ENCODE measurements at regions of chr4 and their contacts with region 1.

Region 1: GRCh38 chr4:176034499-176034898 is 31.1 kb upstream of the WDR17 start:
- DNase-seq: no peak
- H3K4me3 ChIP-seq: no peak overlapping the region
- H3K27ac ChIP-seq: no peak overlapping the region
- H3K4me1 ChIP-seq: no peaks in the 10 kb centered on the region
- H3K27me3 ChIP-seq: no peaks in the 10 kb centered on the region
- CTCF ChIP-seq: peak; percentile 41 to 49

Region 2: DNA sequence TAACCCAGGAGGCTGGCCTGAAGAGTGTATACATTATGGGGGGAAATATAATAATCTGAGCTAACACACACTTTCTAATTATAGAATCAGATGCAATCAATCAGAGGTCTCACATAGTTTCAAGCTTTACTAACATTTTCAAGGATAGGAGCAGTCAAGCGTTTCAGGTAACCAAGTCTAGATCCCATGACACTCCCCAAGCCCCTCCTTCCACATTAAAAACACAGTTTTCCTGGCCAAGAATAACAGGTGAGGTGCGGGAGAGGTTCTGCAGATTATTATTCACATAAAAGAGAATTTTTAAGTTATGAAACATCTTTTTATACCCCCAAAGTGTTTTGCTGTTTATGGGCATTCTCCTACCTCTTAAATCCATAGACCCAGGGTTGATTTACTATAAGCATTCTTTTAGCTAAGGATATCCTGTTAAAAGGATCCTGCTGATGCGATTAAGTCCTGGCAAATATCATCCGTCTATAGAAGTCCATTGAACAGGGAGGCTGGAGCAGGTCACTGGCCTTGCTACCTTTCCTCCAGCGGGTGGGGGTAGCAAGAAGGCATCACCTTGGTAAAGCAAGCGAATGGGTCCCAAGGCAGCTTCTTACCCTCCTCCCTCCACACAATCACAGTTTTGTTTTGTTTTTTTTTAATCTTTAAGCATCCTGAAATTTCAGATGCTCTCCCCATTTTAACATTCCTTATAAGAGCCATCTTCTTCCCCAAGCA is 117.7 kb before region 1 on chr4:
- intact Hi-C with region 1: no loop called
- DNase-seq: no peak
- H3K4me3 ChIP-seq: no peak overlapping the region
- H3K27ac ChIP-seq: no peak overlapping the region
- H3K4me1 ChIP-seq: no peaks in the 10 kb centered on the region
- H3K27me3 ChIP-seq: no peaks in the 10 kb centered on the region
- CTCF ChIP-seq: no peak

Region 3: GRCh38 chr4:175953960-175954521 is 80.5 kb before region 1 on chr4:
- intact Hi-C with region 1: no loop called
- DNase-seq: no peak
- H3K4me3 ChIP-seq: no peak overlapping the region
- H3K27ac ChIP-seq: no peak overlapping the region
- H3K4me1 ChIP-seq: no peaks in the 10 kb centered on the region
- H3K27me3 ChIP-seq: no peaks in the 10 kb centered on the region
- CTCF ChIP-seq: no peak

Region 4: GRCh38 chr4:176013476-176014247 is 20.8 kb before region 1 on chr4:
- intact Hi-C with region 1: no loop called
- DNase-seq: no peak
- H3K4me3 ChIP-seq: no peak overlapping the region
- H3K27ac ChIP-seq: no peak overlapping the region
- H3K4me1 ChIP-seq: no peaks in the 10 kb centered on the region
- H3K27me3 ChIP-seq: no peaks in the 10 kb centered on the region
- CTCF ChIP-seq: no peak

Region 5: GRCh38 chr4:176090115-176090514 is 55.6 kb after region 1 on chr4:
- intact Hi-C with region 1: no loop called
- DNase-seq: peak in 1 of 2 donors; percentile 20
- H3K4me3 ChIP-seq: no peak overlapping the region
- H3K27ac ChIP-seq: no peak overlapping the region
- H3K4me1 ChIP-seq: no peaks in the 10 kb centered on the region
- H3K27me3 ChIP-seq: no peaks in the 10 kb centered on the region
- CTCF ChIP-seq: no peak

Region 6: DNA sequence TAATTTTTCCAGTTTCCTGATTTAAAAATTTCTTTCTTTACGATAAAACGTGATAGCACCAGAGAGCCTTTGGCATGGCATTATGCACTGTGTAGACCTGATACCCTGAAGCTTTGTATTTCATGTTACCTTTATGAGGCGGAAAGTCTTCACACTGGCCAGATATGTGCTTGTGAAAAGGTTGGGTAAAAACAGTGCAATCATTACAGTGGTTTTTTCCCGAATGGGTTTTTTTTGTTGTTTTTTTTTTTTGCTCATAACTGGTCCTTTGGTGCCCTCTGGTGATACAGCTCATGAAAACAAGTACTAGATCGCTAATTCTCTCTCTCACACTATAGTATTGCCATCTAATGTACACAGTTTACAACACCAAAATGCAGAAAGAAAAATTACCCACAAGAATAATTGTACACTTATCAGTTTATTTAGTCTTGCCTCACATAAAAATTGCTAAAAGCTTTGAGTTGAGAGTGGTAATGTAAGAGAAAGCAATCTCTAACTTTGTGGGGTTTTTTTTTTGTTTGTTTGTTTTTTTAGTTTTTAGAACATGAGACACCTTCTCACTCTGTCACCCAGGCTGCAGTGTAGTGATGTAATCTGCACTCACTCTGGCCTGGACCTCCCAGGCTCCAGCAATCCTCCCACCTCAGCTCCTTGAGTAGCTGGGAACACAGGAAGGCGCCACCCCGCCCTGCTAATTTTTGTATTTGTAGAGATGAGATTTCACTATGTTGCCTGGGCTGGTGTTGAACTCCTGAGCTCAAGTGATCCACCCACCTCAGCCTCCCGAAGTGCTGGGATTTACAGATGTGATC is 306.6 kb after region 1 on chr4:
- intact Hi-C with region 1: loop called (anchors 10 kb)
- DNase-seq: no peak
- H3K4me3 ChIP-seq: no peak overlapping the region
- H3K27ac ChIP-seq: no peak overlapping the region
- H3K4me1 ChIP-seq: peaks cover 0 to 21% (median 0%) of the 10 kb centered on the region in 4 donors
- H3K27me3 ChIP-seq: no peaks in the 10 kb centered on the region
- CTCF ChIP-seq: peak; percentile 28 to 30